ENCODE measurements at regions of chr9 and their contacts with region 1.

Region 1: GRCh38 chr9:96553070-96553469 is 66.6 kb downstream of the CDC14B start:
- DNase-seq: no peak
- H3K4me3 ChIP-seq: no peak overlapping the region
- H3K27ac ChIP-seq: peak overlapping the region in 3 of 4 donors; percentile 12 to 56 (median 21)
- H3K4me1 ChIP-seq: peaks cover 4 to 26% (median 12%) of the 10 kb centered on the region in 4 donors
- H3K27me3 ChIP-seq: no peaks in the 10 kb centered on the region
- CTCF ChIP-seq: no peak
- EP300 ChIP-seq: no peak
- POLR2A ChIP-seq: no peak

Region 2: GRCh38 chr9:96460882-96461281 is 92.2 kb before region 1 on chr9:
- intact Hi-C with region 1: loop called (anchors 5 kb)
- DNase-seq: no peak
- H3K4me3 ChIP-seq: no peak overlapping the region
- H3K27ac ChIP-seq: no peak overlapping the region
- H3K4me1 ChIP-seq: peaks cover 0 to 9% (median 4%) of the 10 kb centered on the region in 4 donors
- H3K27me3 ChIP-seq: no peaks in the 10 kb centered on the region
- CTCF ChIP-seq: no peak
- EP300 ChIP-seq: no peak
- POLR2A ChIP-seq: no peak

Region 3: GRCh38 chr9:97076238-97076637 is 523.2 kb after region 1 on chr9:
- intact Hi-C with region 1: no loop called
- DNase-seq: no peak
- H3K4me3 ChIP-seq: no peak overlapping the region
- H3K27ac ChIP-seq: no peak overlapping the region
- H3K4me1 ChIP-seq: peaks cover 0 to 10% (median 7%) of the 10 kb centered on the region in 4 donors
- H3K27me3 ChIP-seq: peaks cover 0 to 65% (median 22%) of the 10 kb centered on the region in 4 donors
- CTCF ChIP-seq: no peak
- EP300 ChIP-seq: no peak
- POLR2A ChIP-seq: no peak

Measured in esophagus muscularis mucosa (tissue), 4 donors.